Activated B cell treated with CpG ODN at 0.5 μM for 24 hours (primary cell): ENCODE measurements at regions of chr11 and their contacts with region 1.

Region 1: GRCh38 chr11:68121067-68121899 is at the start of gene CHKA:
- DNase-seq: peak; percentile 92
- ATAC-seq: peak; percentile 94
- H3K4me3 Mint-ChIP-seq: peak within 1 kb of the TSS; percentile 87
- H3K27ac Mint-ChIP-seq: peak within 1 kb of the TSS; percentile 87
- H3K4me1 Mint-ChIP-seq: peaks cover 29% of the 10 kb centered on the region
- H3K27me3 Mint-ChIP-seq: no peaks in the 10 kb centered on the region
- CTCF ChIP-seq: no peak
- total RNA-seq, gene CHKA: 11.9 and 16.1 TPM in 2 replicates

Region 2: GRCh38 chr11:68030318-68031138 is 90.8 kb before region 1 on chr11 and contains the start of gene NDUFS8:
- CTCF ChIA-PET with region 1: no interaction called
- POLR2A ChIA-PET with region 1: interaction called, 3 read pairs
- intact Hi-C with region 1: loop called (anchors 1 kb)
- DNase-seq: peak; percentile 92
- ATAC-seq: peak; percentile 97
- H3K4me3 Mint-ChIP-seq: peak within 1 kb of the TSS; percentile 93
- H3K27ac Mint-ChIP-seq: peak within 1 kb of the TSS; percentile 83
- H3K4me1 Mint-ChIP-seq: peaks cover 22% of the 10 kb centered on the region
- H3K27me3 Mint-ChIP-seq: no peaks in the 10 kb centered on the region
- CTCF ChIP-seq: no peak
- total RNA-seq, gene NDUFS8: 93.7 and 101 TPM in 2 replicates

Region 3: DNA sequence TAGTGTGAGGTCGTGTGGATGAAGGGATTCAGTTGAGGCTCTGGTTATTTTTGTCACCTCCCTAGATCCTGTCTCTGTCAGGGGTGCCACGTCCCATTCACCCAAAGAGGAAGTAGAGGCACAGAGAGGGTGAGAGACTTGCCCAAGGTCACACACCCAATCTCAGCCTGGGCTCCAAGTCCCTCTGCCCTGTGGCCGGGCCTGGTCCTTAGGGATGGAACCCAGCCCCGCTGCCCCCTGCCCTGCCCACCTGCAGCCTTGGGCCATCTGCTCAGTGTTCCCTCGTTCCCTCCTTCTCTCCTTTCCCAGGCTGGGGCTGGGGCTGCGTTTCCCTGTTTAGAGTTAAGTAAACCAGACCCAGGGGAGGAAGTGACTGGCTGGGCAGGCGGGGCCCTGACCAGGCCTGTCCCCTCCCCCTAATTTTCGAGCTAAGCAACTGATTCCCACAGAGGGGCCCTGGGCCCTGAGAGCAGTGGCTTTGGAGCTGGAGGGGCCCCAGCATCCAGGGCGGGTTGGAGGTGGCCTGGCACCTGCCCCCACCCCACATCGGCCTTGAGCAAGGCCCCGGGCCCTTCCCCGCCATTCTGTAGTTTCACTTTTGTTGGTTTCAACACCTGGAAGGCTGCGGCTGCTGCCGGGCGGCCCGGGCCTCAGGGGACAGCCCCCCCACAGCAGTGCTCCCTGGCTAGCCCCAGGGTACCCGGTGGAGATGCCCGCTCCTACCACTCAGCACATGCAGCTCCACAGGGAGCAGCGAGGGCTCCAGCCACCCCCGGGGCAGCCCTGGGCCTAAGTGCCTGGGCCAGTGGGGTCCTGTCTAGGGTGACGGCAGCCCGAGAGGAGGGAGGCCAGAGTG is 81.0 kb before region 1 on chr11:
- CTCF ChIA-PET with region 1: no interaction called
- POLR2A ChIA-PET with region 1: interaction called, 3 read pairs
- intact Hi-C with region 1: loop called (anchors 1 kb)
- DNase-seq: peak; percentile 71
- ATAC-seq: peak; percentile 75
- H3K4me3 Mint-ChIP-seq: peak overlapping the region; percentile 88
- H3K27ac Mint-ChIP-seq: peak overlapping the region; percentile 92
- H3K4me1 Mint-ChIP-seq: peaks cover 38% of the 10 kb centered on the region
- H3K27me3 Mint-ChIP-seq: no peaks in the 10 kb centered on the region
- CTCF ChIP-seq: no peak

Region 4: GRCh38 chr11:68064926-68065325 is 56.4 kb before region 1 on chr11:
- CTCF ChIA-PET with region 1: no interaction called
- POLR2A ChIA-PET with region 1: no interaction called
- intact Hi-C with region 1: no loop called
- DNase-seq: no peak
- ATAC-seq: no peak
- H3K4me3 Mint-ChIP-seq: no peak overlapping the region
- H3K27ac Mint-ChIP-seq: no peak overlapping the region
- H3K4me1 Mint-ChIP-seq: no peaks in the 10 kb centered on the region
- H3K27me3 Mint-ChIP-seq: no peaks in the 10 kb centered on the region
- CTCF ChIP-seq: no peak

Region 5: DNA sequence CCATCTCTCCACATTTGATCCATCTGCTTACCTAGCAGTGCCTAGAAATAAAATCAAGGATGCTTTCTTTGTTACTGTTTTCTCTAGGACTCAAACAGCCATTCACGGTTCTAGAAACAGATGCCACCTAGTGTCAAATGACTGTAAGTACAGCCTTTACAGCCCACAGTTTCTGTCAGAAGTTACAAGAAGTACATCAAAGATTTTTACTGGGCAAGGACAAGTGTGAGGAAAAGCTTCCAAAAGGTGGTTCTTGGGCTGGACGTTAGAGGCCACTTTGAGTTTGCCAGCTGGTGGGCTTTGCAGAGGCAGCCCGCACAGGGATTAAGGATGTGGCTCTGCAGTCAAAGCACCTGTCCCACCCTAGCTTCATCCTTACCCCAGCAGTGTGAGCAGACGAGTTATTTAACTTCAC is 84.9 kb after region 1 on chr11:
- CTCF ChIA-PET with region 1: no interaction called
- POLR2A ChIA-PET with region 1: no interaction called
- intact Hi-C with region 1: no loop called
- DNase-seq: no peak
- ATAC-seq: peak; percentile 72
- H3K4me3 Mint-ChIP-seq: no peak overlapping the region
- H3K27ac Mint-ChIP-seq: peak overlapping the region; percentile 31
- H3K4me1 Mint-ChIP-seq: peaks cover 76% of the 10 kb centered on the region
- H3K27me3 Mint-ChIP-seq: no peaks in the 10 kb centered on the region
- CTCF ChIP-seq: peak; percentile 66

Region 6: GRCh38 chr11:68459886-68460740 is 338.8 kb after region 1 on chr11:
- CTCF ChIA-PET with region 1: no interaction called
- POLR2A ChIA-PET with region 1: no interaction called
- intact Hi-C with region 1: no loop called
- DNase-seq: peak; percentile 81
- ATAC-seq: peak; percentile 92
- H3K4me3 Mint-ChIP-seq: peak overlapping the region; percentile 94
- H3K27ac Mint-ChIP-seq: peak overlapping the region; percentile 97
- H3K4me1 Mint-ChIP-seq: peaks cover 39% of the 10 kb centered on the region
- H3K27me3 Mint-ChIP-seq: no peaks in the 10 kb centered on the region
- CTCF ChIP-seq: no peak